ENCODE measurements at regions of chr5 and their contacts with region 1.

Region 1: GRCh38 chr5:160021831-160022446 is 13.0 kb downstream of the TTC1 start:
- DNase-seq: peak; percentile 56
- ATAC-seq: peak; percentile 98
- H3K4me3 Mint-ChIP-seq: no peak overlapping the region
- H3K27ac Mint-ChIP-seq: no peak overlapping the region
- H3K4me1 Mint-ChIP-seq: peaks cover 29% of the 10 kb centered on the region
- H3K27me3 Mint-ChIP-seq: no peaks in the 10 kb centered on the region
- CTCF ChIP-seq: peak; percentile 93

Region 2: GRCh38 chr5:160008877-160009590 is 12.9 kb before region 1 on chr5 and contains the start of gene TTC1:
- CTCF ChIA-PET with region 1: interaction called, 23 read pairs
- POLR2A ChIA-PET with region 1: interaction called, 5 read pairs
- intact Hi-C with region 1: no loop called
- DNase-seq: peak; percentile 97
- ATAC-seq: peak; percentile 99
- H3K4me3 Mint-ChIP-seq: peak within 1 kb of the TSS; percentile 92
- H3K27ac Mint-ChIP-seq: peak within 1 kb of the TSS; percentile 98
- H3K4me1 Mint-ChIP-seq: peaks cover 23% of the 10 kb centered on the region
- H3K27me3 Mint-ChIP-seq: no peaks in the 10 kb centered on the region
- CTCF ChIP-seq: no peak
- total RNA-seq, gene TTC1: 50.2 to 57.5 TPM

Region 3: GRCh38 chr5:160036243-160036642 is 14.3 kb after region 1 on chr5:
- CTCF ChIA-PET with region 1: interaction called, 17 read pairs
- POLR2A ChIA-PET with region 1: no interaction called
- intact Hi-C with region 1: no loop called
- DNase-seq: no peak
- ATAC-seq: no peak
- H3K4me3 Mint-ChIP-seq: no peak overlapping the region
- H3K27ac Mint-ChIP-seq: no peak overlapping the region
- H3K4me1 Mint-ChIP-seq: peaks cover 2% of the 10 kb centered on the region
- H3K27me3 Mint-ChIP-seq: no peaks in the 10 kb centered on the region
- CTCF ChIP-seq: no peak

Region 4: GRCh38 chr5:160119142-160119904 is 97.4 kb after region 1 on chr5 and contains the start of gene PWWP2A:
- CTCF ChIA-PET with region 1: no interaction called
- POLR2A ChIA-PET with region 1: no interaction called
- intact Hi-C with region 1: loop called (anchors 10 kb)
- DNase-seq: peak; percentile 98
- ATAC-seq: peak; percentile 95
- H3K4me3 Mint-ChIP-seq: peak within 1 kb of the TSS; percentile 83
- H3K27ac Mint-ChIP-seq: peak within 1 kb of the TSS; percentile 94
- H3K4me1 Mint-ChIP-seq: peaks cover 15% of the 10 kb centered on the region
- H3K27me3 Mint-ChIP-seq: no peaks in the 10 kb centered on the region
- CTCF ChIP-seq: no peak
- total RNA-seq, gene PWWP2A: 16.0 to 17.5 TPM

Region 5: GRCh38 chr5:160199410-160199911 is 177.5 kb after region 1 on chr5:
- CTCF ChIA-PET with region 1: interaction called, 11 read pairs
- POLR2A ChIA-PET with region 1: no interaction called
- intact Hi-C with region 1: no loop called
- DNase-seq: peak; percentile 73
- ATAC-seq: peak; percentile 100
- H3K4me3 Mint-ChIP-seq: peak overlapping the region; percentile 58
- H3K27ac Mint-ChIP-seq: no peak overlapping the region
- H3K4me1 Mint-ChIP-seq: peaks cover 6% of the 10 kb centered on the region
- H3K27me3 Mint-ChIP-seq: peaks cover 4% of the 10 kb centered on the region
- CTCF ChIP-seq: peak; percentile 84

Measured in activated CD8-positive, alpha-beta T cell treated with anti-CD3 and anti-CD28 coated beads for 36 hours (primary cell).